ENCODE measurements at regions of chr6 and their contacts with region 1.

Region 1: DNA sequence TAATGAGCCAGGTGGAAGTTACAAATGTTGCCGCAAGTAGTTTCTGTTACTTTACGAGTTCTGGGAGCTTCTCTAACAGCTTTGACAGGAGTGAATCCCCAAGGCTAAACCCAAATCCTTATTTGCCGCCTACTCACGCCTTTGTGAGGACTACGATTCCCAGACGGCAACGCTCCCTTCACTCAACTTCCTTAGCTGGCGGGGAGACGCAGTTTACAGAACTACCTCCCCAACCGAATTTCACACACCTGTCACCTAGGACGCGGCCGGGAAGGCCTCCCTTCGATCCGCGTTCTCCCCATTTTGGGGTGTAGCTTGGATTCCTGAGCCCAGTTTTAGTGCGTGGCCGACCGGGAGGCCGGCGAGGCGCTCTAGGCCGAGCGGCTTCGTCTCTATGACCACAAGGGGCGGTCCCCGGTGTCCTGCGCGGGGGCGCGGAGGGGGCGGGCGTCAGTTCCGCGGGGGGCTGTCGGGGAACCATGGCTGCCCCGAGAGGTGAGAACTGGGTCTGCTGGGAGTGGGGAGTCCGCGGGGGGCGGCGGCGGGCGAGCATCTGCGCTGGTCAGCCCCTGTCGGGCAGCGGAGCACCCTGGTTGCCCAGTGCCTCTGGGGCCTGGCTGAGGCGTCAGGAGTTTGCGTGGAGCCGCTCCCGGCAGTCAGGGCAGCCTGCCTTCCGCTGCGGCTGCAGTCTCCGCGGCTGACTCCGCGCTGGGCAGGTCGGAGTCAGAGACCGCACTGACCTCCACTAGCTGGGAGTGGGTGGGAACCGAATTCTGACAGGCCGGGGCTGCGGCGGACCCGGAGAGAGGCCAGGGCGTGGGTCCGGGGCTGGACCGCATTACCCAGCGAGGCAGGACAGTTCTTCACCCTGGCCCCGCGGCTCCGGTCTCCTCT is at the start of gene SLC35A1:
- DNase-seq: peak; percentile 89
- H3K4me3 ChIP-seq: peak within 1 kb of the TSS; percentile 53 to 86 (median 80)
- H3K27ac ChIP-seq: peak within 1 kb of the TSS; percentile 90 to 95 (median 94)
- H3K4me1 ChIP-seq: peaks cover 0 to 24% (median 14%) of the 10 kb centered on the region in 4 donors
- H3K27me3 ChIP-seq: no peaks in the 10 kb centered on the region
- CTCF ChIP-seq: peak; percentile 37 to 69 (median 41)
- EP300 ChIP-seq: no peak
- POLR2A ChIP-seq: peak; percentile 87
- total RNA-seq, gene SLC35A1: 8.0 to 43.3 (median 22.7) TPM

Region 2: GRCh38 chr6:87154993-87155841 is 317.6 kb before region 1 on chr6 and contains the start of gene ZNF292:
- in situ Hi-C with region 1: no loop called
- intact Hi-C with region 1: loop called (anchors 5 kb)
- DNase-seq: peak; percentile 98
- H3K4me3 ChIP-seq: peak within 1 kb of the TSS; percentile 91 to 95 (median 92)
- H3K27ac ChIP-seq: peak within 1 kb of the TSS; percentile 95 to 98 (median 96)
- H3K4me1 ChIP-seq: peaks cover 15 to 67% (median 44%) of the 10 kb centered on the region in 4 donors
- H3K27me3 ChIP-seq: no peaks in the 10 kb centered on the region
- CTCF ChIP-seq: peak in 1 of 5 experiments; percentile 7
- EP300 ChIP-seq: peak; percentile 8
- POLR2A ChIP-seq: peak; percentile 76
- total RNA-seq, gene ZNF292: 18.5 to 61.8 (median 42.4) TPM

Region 3: DNA sequence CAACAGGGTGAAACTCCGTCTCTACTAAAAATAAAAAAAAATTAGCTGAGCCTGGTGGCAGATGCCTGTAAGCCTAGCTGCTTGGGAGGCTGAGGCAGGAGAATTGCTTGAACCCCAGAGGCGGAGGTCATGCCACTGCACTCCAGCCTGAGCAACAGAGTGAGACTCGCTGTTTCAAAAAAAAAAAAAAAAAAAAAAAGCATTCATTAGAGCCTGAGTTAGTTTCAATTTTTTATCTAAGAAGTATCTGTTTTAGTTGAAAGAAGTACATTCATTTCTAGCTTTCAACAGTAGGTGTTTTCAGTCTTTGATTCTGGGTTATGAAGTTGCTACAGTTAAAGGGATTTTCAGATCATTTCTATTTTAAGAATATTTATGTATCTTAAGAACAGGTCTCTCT is 275.2 kb before region 1 on chr6:
- in situ Hi-C with region 1: no loop called
- intact Hi-C with region 1: no loop called
- DNase-seq: no peak
- H3K4me3 ChIP-seq: no peak overlapping the region
- H3K27ac ChIP-seq: no peak overlapping the region
- H3K4me1 ChIP-seq: peaks cover 0 to 17% (median 0%) of the 10 kb centered on the region in 4 donors
- H3K27me3 ChIP-seq: no peaks in the 10 kb centered on the region
- CTCF ChIP-seq: no peak
- EP300 ChIP-seq: no peak
- POLR2A ChIP-seq: no peak

Region 4: GRCh38 chr6:87407901-87408720 is 64.7 kb before region 1 on chr6 and contains the start of gene CFAP206:
- in situ Hi-C with region 1: no loop called
- intact Hi-C with region 1: loop called (anchors 10 kb)
- DNase-seq: peak; percentile 84
- H3K4me3 ChIP-seq: peak within 1 kb of the TSS; percentile 60 to 98 (median 90)
- H3K27ac ChIP-seq: peak within 1 kb of the TSS; percentile 86 to 91 (median 88)
- H3K4me1 ChIP-seq: peaks cover 0 to 11% (median 4%) of the 10 kb centered on the region in 4 donors
- H3K27me3 ChIP-seq: no peaks in the 10 kb centered on the region
- CTCF ChIP-seq: no peak
- EP300 ChIP-seq: no peak
- POLR2A ChIP-seq: no peak
- total RNA-seq, gene CFAP206: not detected

Region 5: DNA sequence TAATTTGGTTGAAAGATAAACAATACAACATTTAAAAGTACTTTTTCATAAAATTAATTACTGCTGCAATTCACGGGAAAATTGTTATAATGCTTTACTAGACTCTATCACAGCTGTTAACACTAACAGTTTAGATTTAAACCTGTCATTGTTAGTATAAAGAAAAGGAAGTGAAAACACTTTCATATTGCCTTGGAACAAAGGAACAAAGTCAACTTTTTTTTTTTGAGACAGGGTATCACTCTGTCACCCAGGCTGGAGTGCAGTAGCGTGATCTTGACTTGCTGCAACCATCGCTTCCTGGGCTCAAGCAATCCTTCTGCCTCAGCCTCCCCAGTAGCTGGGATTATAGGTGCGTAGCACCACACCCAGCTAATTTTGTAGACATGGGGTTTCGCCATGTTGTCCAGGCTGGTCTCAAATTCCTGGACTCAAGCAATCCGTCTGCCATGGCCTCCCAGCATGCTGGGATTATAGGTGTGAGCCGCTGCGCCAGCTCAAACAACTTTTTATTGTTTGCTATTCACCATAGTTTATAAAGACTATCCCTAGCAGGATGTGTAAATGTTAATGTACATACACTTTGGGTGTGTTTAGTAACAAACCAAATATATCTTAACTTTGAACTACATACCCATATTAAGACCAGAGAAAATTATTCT is 22.1 kb after region 1 on chr6:
- in situ Hi-C with region 1: no loop called
- intact Hi-C with region 1: no loop called
- DNase-seq: peak; percentile 66
- H3K4me3 ChIP-seq: no peak overlapping the region
- H3K27ac ChIP-seq: peak overlapping the region; percentile 56 to 79 (median 62)
- H3K4me1 ChIP-seq: peaks cover 0 to 15% (median 12%) of the 10 kb centered on the region in 4 donors
- H3K27me3 ChIP-seq: no peaks in the 10 kb centered on the region
- CTCF ChIP-seq: no peak
- EP300 ChIP-seq: no peak
- POLR2A ChIP-seq: no peak

Region 6: GRCh38 chr6:87656857-87657256 is 184.1 kb after region 1 on chr6:
- in situ Hi-C with region 1: no loop called
- intact Hi-C with region 1: no loop called
- DNase-seq: peak; percentile 9
- H3K4me3 ChIP-seq: no peak overlapping the region
- H3K27ac ChIP-seq: no peak overlapping the region
- H3K4me1 ChIP-seq: peaks cover 0 to 3% (median 0%) of the 10 kb centered on the region in 4 donors
- H3K27me3 ChIP-seq: no peaks in the 10 kb centered on the region
- CTCF ChIP-seq: no peak
- EP300 ChIP-seq: no peak
- POLR2A ChIP-seq: no peak

Region 7: DNA sequence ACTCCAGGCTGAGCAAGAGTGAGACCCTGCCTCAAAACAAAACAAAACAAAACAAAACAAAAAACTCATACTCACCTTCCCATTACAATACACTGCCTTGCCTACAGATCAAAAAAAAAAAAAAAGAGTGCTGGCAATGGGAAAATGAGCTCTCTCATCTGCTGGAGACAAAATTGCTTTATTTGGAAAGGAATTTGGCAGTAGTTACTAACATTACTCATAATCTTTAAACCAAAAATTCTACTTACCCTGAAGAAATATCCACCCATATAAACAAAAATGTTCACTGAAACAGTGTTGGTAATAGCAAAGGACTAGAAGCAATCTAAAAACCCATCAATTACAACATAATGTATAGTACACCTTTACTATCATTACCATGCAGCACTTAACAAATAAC is 1370.3 kb after region 1 on chr6:
- in situ Hi-C with region 1: no loop called
- intact Hi-C with region 1: no loop called
- DNase-seq: no peak
- H3K4me3 ChIP-seq: no peak overlapping the region
- H3K27ac ChIP-seq: peak overlapping the region in 1 of 4 donors; percentile 6
- H3K4me1 ChIP-seq: peaks cover 0 to 11% (median 5%) of the 10 kb centered on the region in 4 donors
- H3K27me3 ChIP-seq: no peaks in the 10 kb centered on the region
- CTCF ChIP-seq: no peak
- EP300 ChIP-seq: no peak
- POLR2A ChIP-seq: no peak